ENCODE measurements at regions of chr4 and their contacts with region 1.

Region 1: DNA sequence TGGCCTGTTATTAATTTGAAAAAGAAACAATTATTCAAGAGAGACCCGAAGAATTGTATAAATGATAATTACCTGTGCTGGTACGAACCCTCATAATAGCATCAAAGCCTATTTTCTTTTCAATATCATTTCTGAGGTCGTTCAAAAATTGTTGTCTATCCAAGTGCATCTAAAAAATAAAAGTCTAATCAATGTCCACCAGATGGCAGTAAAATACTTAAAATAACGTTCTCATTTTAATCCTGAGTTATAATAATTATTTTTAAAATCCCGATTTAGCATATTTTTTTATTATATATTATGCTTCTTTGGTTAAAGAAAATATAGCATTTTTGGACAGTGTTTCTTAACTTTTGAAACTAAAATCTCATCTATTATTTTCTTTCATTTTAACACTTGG is 55.7 kb downstream of the METTL14 start:
- DNase-seq: no peak
- H3K4me3 Mint-ChIP-seq: no peak overlapping the region
- H3K27ac Mint-ChIP-seq: no peak overlapping the region
- H3K4me1 Mint-ChIP-seq: peaks cover 2% of the 10 kb centered on the region
- H3K27me3 Mint-ChIP-seq: no peaks in the 10 kb centered on the region

Region 2: GRCh38 chr4:118684873-118685811 is 55.7 kb before region 1 on chr4 and contains the start of gene METTL14:
- intact Hi-C with region 1: no loop called
- DNase-seq: peak; percentile 96
- H3K4me3 Mint-ChIP-seq: peak within 1 kb of the TSS; percentile 98
- H3K27ac Mint-ChIP-seq: peak within 1 kb of the TSS; percentile 95
- H3K4me1 Mint-ChIP-seq: peaks cover 11% of the 10 kb centered on the region
- H3K27me3 Mint-ChIP-seq: peaks cover 2% of the 10 kb centered on the region
- total RNA-seq, gene METTL14: 50.2 and 51.9 TPM in 2 replicates

Region 3: GRCh38 chr4:118801899-118802575 is 61.2 kb after region 1 on chr4:
- intact Hi-C with region 1: loop called (anchors 10 kb)
- DNase-seq: peak; percentile 18
- H3K4me3 Mint-ChIP-seq: no peak overlapping the region
- H3K27ac Mint-ChIP-seq: no peak overlapping the region
- H3K4me1 Mint-ChIP-seq: no peaks in the 10 kb centered on the region
- H3K27me3 Mint-ChIP-seq: no peaks in the 10 kb centered on the region

Measured in activated CD4-positive, alpha-beta T cell treated with anti-CD3 and anti-CD28 coated beads, Interleukin-2, amount 10 ng/mL, durations not matched to agents 24 days and 14 days (primary cell).